Activated B cell treated with CpG ODN at 0.5 μM for 24 hours (primary cell): ENCODE measurements at regions of chr3 and their contacts with region 1.

Region 1: DNA sequence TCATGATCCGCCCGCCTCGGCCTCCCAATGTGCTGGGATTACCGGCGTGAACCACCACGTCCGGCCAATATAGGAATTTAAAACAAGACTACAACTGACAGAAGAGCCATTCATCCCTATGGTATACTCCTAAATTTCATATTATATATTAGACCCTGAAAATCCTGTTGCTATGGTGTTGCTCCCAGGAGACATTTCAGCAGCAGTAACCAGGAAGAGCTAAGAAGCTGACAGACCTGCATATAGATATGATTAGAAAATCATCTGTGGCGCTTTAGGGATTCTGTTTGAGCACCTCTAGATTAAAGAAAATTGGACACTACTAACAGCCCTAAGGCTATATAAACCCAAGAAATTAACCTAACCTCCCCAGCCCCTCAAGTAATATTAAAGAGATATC is 38.8 kb downstream of the TBL1XR1 start:
- DNase-seq: no peak
- ATAC-seq: no peak
- H3K4me3 Mint-ChIP-seq: no peak overlapping the region
- H3K27ac Mint-ChIP-seq: no peak overlapping the region
- H3K4me1 Mint-ChIP-seq: peaks cover 61% of the 10 kb centered on the region
- H3K27me3 Mint-ChIP-seq: no peaks in the 10 kb centered on the region
- CTCF ChIP-seq: no peak

Region 2: DNA sequence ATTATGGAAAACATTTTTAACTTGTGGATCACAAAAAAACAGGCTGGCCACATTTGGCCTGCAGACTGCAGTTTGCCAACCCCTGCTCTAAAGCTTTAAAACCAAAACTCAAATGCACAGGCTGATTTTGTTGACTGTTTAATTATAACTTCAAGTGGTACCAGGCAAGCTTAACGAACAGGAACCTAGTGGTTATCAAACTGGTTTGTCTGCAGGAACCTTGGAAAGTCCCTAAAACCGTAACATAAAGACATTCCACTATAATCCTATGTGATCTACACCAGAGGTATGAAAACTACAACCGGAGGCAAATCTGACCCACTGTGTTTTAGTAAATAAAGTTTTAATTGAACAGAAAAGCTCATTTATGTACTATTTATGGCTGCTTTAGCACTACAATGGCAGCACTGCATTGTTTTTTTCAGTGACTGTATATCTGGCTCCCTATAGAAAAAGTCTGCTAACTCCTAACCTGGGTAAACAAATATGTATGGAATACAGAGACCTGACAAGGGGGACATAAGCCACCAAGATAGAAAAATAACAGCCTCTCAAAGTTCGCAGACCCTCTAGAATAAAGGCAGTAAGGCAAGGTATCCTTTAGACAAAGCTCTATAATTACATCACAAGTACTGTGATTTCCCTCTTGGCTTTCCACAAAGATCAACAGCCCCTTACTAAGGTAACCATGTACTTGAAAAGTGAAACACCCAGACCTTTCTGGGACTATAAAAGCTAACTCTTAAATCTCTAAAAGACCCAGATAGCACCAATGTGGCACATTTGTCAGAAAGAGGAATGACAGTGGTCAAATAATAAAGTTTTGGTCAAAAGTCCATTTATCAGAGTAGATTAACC is 13.3 kb before region 1 on chr3:
- CTCF ChIA-PET with region 1: no interaction called
- POLR2A ChIA-PET with region 1: interaction called, 7 read pairs
- intact Hi-C with region 1: loop called (anchors 2 kb)
- DNase-seq: no peak
- ATAC-seq: peak; percentile 68
- H3K4me3 Mint-ChIP-seq: peak overlapping the region; percentile 54
- H3K27ac Mint-ChIP-seq: peak overlapping the region; percentile 83
- H3K4me1 Mint-ChIP-seq: peaks cover 90% of the 10 kb centered on the region
- H3K27me3 Mint-ChIP-seq: no peaks in the 10 kb centered on the region
- CTCF ChIP-seq: no peak